Lower leg skin (tissue), 4 donors: ENCODE measurements at regions of chr9 and their contacts with region 1.

Region 1: DNA sequence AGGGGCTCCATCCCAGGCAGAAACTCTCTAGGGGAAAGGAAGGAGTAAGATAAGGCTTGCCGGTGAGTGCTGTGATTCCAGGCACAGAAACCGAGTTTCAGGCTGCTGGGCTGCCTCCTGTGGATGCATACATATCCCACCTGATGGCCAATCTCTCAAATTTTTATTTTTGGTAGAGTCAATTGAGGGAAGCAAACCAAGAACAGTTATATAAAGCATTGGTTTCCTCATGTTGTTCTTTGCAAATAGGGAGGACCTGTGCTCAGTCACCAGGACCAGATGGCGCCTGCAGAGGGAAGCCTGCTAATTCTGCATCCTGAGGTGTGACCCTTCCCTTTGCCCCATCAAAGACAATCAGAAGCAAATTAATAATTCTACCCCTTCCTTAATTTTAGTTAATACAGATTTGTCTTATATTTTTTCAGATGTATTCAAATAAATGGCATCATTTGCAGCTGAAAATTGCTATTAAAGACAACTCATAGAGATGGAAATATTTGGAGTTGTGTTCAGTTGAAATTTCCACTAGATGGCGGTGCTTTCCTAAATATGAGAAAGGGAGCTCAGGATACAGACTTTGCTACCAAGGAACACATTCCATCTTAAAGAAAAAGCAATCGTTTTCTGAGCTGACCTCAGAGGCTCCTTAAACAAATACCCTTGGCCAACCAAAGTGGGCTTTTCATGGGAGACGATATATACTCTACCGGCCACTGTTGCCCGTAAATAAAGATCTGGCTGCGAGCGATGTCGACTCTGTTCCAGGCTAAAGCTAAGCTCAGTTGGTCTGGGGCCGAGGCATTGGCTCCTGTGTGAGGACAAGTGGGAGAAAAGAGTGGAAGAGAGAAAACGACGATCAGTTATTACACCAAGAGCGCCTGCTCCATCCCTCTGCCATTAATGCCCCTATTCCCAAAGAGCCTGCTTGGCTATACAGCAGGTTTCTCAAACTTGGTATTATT is 225.7 kb upstream of the KLF9 start:
- DNase-seq: no peak
- H3K4me3 ChIP-seq: no peak overlapping the region
- CTCF ChIP-seq: no peak
- POLR2A ChIP-seq: no peak

Region 2: DNA sequence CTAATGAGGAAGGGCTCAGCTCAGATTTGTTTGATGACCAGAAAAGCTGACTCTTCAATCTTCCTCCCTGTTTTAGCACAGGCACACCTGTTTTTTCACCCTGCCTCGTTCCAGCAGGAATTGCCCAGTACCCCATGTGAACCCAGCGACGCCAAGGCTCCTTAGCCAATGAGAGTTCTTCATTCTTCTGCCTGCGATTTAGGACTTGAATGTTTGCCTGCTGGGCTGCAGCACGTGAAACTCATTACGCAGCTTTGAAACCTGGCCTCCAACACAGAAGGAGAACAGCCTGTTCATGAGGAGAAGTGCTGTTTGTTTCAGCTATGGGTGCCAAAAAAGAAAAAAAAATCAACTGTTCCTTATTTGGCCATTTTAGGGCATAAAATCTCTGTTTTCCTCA is 165.8 kb after region 1 on chr9:
- intact Hi-C with region 1: no loop called
- DNase-seq: peak in 1 of 2 donors; percentile 26
- H3K4me3 ChIP-seq: no peak overlapping the region
- CTCF ChIP-seq: no peak
- POLR2A ChIP-seq: no peak

Region 3: GRCh38 chr9:70868661-70869652 is 228.8 kb after region 1 on chr9:
- intact Hi-C with region 1: loop called (anchors 5 kb)
- DNase-seq: no peak
- H3K4me3 ChIP-seq: no peak overlapping the region
- CTCF ChIP-seq: no peak
- POLR2A ChIP-seq: no peak

Region 4: GRCh38 chr9:70998962-70999361 is 358.8 kb after region 1 on chr9:
- intact Hi-C with region 1: loop called (anchors 10 kb)
- DNase-seq: no peak
- H3K4me3 ChIP-seq: no peak overlapping the region
- CTCF ChIP-seq: no peak
- POLR2A ChIP-seq: no peak

Region 5: GRCh38 chr9:71249729-71250317 is 609.7 kb after region 1 on chr9:
- intact Hi-C with region 1: loop called (anchors 10 kb)
- DNase-seq: no peak
- H3K4me3 ChIP-seq: no peak overlapping the region
- CTCF ChIP-seq: no peak
- POLR2A ChIP-seq: no peak